ENCODE measurements at regions of chr13 and their contacts with region 1.

Region 1: DNA sequence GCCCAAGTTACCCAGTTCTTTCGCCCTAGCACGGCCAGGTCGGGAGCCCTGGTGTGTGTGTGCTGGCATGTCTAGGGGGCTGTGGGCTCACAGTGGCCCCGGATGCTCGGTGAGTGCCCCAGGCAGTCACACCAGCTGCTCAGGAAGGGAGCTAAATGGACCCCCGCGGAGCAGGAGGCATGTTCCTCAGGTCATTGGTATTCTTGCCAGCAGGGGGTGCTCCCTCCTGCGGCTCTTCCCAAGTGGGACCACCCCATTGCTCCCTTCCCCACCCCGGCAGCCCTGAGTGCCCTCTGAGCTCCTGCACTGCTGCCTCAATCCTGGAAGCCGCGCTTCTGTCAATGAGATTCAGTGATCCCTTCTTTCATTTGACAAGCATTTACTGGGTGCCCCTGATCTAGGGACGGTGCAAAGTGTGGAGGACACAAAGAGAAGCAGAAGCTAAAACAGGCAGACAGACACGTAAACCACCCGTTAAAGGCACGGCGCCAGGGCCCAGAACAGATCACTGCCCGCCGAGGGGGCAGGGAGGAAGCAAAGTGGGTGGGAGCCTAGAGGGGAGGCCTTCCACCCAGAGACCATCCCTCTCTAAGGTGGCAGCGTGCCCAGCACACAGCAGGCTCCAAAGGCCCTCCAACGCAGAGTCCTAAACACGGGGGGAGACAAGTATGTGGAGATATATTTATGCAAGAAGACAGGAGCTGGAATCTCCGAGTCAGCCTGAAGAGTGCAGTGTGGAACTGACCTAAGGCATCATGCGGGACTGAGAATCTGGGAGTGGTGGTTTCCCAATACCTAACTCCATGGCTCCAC is 5.2 kb upstream of the ADPRHL1 start:
- DNase-seq: peak; percentile 55
- ATAC-seq: peak; percentile 79
- H3K4me3 ChIP-seq: no peak overlapping the region
- H3K27ac ChIP-seq: no peak overlapping the region
- H3K4me1 ChIP-seq: peaks cover 2% of the 10 kb centered on the region; the same call in 1 of the 2 replicates
- H3K27me3 ChIP-seq: no peaks in the 10 kb centered on the region
- CTCF ChIP-seq: peak; percentile 37; the same call in 1 of the 2 replicates
- POLR2A ChIP-seq: no peak
- RAD21 ChIP-seq: peak; percentile 36

Region 2: DNA sequence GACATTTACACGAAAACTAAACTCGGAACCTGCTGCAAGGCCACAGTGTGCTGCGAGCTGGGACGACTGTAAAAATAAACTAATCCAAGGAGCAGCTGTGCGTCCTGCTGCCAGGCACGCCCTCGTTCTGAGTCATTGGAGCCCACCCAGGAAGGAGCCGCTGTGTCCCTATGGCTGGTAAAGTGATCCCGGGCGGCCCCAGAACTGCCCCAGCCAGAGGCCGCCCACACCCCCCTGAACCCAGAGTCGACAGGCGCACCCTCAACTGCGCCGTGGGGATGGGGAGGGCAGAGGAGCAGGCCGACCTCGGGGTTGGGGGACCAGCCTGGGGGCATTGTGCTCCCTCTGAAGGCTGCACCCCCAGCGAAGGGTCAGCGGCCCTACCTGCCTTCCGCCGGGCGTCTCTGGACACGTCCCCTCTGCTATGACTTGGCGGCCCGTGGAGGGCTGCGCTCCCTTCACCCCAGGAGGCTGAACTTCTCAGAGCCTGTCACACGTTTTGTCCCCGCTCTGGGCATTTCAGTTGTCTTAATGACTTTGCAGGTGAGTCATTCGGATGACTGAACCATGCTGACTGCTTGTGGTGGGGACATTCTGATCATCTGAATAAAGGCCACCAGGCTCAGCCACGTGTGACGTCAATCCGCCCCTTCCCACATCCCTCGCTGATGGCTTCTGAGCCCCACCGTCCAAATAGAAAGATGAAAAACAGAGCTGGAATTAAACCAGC is 47.8 kb before region 1 on chr13:
- CTCF ChIA-PET with region 1: no interaction called
- POLR2A ChIA-PET with region 1: interaction called, 10 read pairs
- dilution Hi-C with region 1: no loop called
- in situ Hi-C with region 1: no loop called
- intact Hi-C with region 1: no loop called
- DNase-seq: peak; percentile 93
- ATAC-seq: peak; percentile 73
- H3K4me3 ChIP-seq: peak overlapping the region; percentile 13; the same call in 1 of the 2 replicates
- H3K27ac ChIP-seq: peak overlapping the region; percentile 82
- H3K4me1 ChIP-seq: peaks cover 23% of the 10 kb centered on the region
- H3K27me3 ChIP-seq: no peaks in the 10 kb centered on the region
- CTCF ChIP-seq: no peak
- POLR2A ChIP-seq: peak; percentile 45
- RAD21 ChIP-seq: no peak

Region 3: DNA sequence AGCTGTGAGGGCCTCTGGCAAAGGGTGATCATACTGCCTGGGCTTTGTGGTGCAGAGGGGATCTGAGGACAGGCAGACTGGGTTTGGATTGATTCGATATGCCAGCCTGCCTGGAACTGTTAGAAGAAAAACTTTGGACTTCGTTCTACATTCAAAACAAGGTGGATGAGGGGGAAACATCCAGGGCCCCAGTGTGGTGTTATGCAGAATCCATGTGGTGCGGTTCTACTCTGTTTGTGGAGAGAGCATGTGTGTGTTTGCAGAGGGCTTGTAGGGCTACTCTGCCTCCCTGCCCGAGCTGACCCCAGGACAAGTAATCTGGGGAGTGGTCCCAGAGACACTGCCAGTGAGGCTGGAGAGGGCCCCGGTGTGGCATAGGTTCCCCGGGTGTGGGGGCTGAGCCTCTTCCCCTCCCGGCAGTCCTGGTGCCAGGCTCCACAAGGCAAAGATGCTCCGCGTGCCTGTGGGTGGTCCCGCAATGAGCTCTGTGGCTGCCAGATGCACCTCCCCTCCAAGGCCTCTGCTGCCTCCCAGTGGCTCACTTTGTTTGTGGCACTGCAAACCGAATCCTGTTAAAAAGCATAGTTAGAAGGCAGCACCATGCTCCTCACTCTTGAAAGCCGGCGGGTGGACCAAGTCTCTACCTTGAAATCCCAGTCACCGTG is 103.8 kb after region 1 on chr13:
- CTCF ChIA-PET with region 1: interaction called, 4 read pairs
- POLR2A ChIA-PET with region 1: no interaction called
- dilution Hi-C with region 1: no loop called
- in situ Hi-C with region 1: no loop called
- intact Hi-C with region 1: loop called (anchors 1 kb)
- DNase-seq: peak; percentile 76
- ATAC-seq: peak; percentile 96
- H3K4me3 ChIP-seq: no peak overlapping the region
- H3K27ac ChIP-seq: no peak overlapping the region
- H3K4me1 ChIP-seq: no peaks in the 10 kb centered on the region
- H3K27me3 ChIP-seq: peaks cover 15% of the 10 kb centered on the region
- CTCF ChIP-seq: peak; percentile 90
- POLR2A ChIP-seq: no peak
- RAD21 ChIP-seq: peak; percentile 84

Region 4: GRCh38 chr13:113887700-113888201 is 429.3 kb after region 1 on chr13:
- CTCF ChIA-PET with region 1: no interaction called
- POLR2A ChIA-PET with region 1: no interaction called
- dilution Hi-C with region 1: no loop called
- in situ Hi-C with region 1: no loop called
- intact Hi-C with region 1: no loop called
- DNase-seq: no peak
- ATAC-seq: peak; percentile 22; the same call in 1 of the 2 replicates
- H3K4me3 ChIP-seq: no peak overlapping the region
- H3K27ac ChIP-seq: no peak overlapping the region
- H3K4me1 ChIP-seq: peaks cover 14% of the 10 kb centered on the region
- H3K27me3 ChIP-seq: no peaks in the 10 kb centered on the region
- CTCF ChIP-seq: no peak
- POLR2A ChIP-seq: no peak
- RAD21 ChIP-seq: no peak

Measured in IMR-90 (cell line).